ENCODE measurements at regions of chr1 and their contacts with region 1.

Region 1: GRCh38 chr1:85230305-85230980 is 29.0 kb downstream of the C1orf52 start:
- DNase-seq: no peak
- ATAC-seq: peak in 2 of 4 donors; percentile 46 to 55
- H3K4me3 ChIP-seq: no peak overlapping the region
- H3K27ac ChIP-seq: no peak overlapping the region
- H3K4me1 ChIP-seq: no peaks in the 10 kb centered on the region
- H3K27me3 ChIP-seq: no peaks in the 10 kb centered on the region
- CTCF ChIP-seq: peak in 1 of 4 donors; percentile 17
- POLR2A ChIP-seq: no peak

Region 2: DNA sequence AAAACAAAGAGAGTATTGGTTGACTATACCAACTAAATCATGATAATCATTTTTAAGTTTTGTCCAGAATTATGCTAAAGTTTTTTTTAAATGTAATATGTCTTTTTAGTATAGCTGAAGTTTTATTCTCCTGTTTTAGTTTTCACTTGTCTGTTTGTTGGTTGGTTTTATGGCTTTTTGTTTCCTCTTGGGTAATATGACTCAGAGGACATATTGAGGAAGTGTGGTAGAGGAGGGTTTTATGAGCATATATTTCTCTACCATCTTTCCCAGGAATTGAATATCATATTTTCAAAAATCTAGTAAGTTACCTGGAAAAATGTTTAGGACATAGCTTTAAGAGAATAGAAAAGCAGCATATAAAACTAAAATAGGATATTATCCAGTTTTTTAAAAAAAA is 113.6 kb before region 1 on chr1:
- intact Hi-C with region 1: loop called (anchors 5 to 10 kb)
- DNase-seq: no peak
- ATAC-seq: no peak
- H3K4me3 ChIP-seq: no peak overlapping the region
- H3K27ac ChIP-seq: no peak overlapping the region
- H3K4me1 ChIP-seq: no peaks in the 10 kb centered on the region
- H3K27me3 ChIP-seq: no peaks in the 10 kb centered on the region
- CTCF ChIP-seq: no peak
- POLR2A ChIP-seq: no peak

Region 3: DNA sequence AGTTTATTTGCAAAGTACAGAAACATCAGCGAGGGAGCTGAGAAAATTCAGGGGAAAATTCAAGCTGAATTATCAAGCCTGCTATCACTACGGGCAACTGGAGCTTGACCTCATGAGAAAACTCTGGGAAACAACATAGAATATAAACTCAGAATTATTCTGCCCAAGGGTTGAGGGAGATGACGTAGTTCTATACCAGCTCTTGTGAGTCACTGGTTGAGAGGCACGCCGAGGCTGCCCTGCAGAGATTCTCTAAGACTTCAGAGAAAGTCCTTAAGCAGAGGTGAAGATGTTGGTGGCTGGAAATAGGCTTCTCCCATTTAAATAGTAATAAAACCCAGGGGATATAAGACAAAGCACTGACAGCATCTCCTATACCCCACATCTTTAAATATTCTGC is 41.9 kb before region 1 on chr1:
- intact Hi-C with region 1: no loop called
- DNase-seq: no peak
- ATAC-seq: no peak
- H3K4me3 ChIP-seq: no peak overlapping the region
- H3K27ac ChIP-seq: no peak overlapping the region
- H3K4me1 ChIP-seq: peaks cover 0 to 3% (median 0%) of the 10 kb centered on the region in 4 donors
- H3K27me3 ChIP-seq: no peaks in the 10 kb centered on the region
- CTCF ChIP-seq: no peak
- POLR2A ChIP-seq: no peak

Measured in right lobe of liver (tissue), 6 donors.